Activated CD4-positive, alpha-beta memory T cell treated with anti-CD3 and anti-CD28 coated beads, Interleukin-2, amount 10 ng/mL, durations not matched to agents 7 days and 5 days (primary cell): ENCODE measurements at regions of chr12 and their contacts with region 1.

Region 1: DNA sequence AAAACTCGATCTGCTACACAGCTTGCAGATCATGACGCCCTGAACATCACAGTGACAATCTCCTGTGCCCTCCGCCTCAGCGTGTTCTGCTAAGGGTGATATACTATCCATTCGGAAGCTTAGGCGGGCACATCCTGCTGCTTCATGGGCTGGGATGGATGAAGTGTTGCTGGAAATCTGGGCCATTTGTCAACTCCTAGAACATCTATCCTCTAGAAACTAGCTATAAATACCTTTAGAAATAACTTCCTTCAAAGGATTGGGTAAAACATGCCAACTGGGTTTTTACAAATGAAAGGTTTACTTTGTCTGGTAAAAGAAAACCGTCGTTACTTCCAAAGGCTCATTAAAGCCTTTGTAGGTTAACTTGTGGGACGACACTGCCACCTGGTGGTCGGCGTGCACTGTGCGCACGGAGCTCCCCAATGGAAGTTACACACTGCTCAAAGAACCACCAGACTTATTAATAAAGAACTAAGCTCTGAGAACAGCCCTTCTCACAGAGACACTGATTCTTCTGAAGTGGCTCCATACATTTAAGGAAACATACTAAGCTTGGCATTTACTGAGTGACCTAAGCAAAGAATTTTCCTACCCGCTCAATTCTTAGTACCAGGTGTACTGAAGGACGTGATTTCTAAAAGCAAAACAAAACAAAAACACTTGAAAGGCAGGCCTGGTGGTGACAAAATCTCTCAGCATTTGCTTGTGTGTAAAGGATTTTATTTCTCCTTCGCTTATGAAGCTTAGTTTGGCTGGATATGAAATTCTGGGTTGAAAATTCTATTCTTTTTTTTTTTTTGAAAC is 21.6 kb upstream of the CACNA2D4 start:
- DNase-seq: peak; percentile 89
- H3K4me3 Mint-ChIP-seq: no peak overlapping the region
- H3K27ac Mint-ChIP-seq: peak overlapping the region; percentile 34
- H3K4me1 Mint-ChIP-seq: peaks cover 4% of the 10 kb centered on the region
- H3K27me3 Mint-ChIP-seq: no peaks in the 10 kb centered on the region

Region 2: DNA sequence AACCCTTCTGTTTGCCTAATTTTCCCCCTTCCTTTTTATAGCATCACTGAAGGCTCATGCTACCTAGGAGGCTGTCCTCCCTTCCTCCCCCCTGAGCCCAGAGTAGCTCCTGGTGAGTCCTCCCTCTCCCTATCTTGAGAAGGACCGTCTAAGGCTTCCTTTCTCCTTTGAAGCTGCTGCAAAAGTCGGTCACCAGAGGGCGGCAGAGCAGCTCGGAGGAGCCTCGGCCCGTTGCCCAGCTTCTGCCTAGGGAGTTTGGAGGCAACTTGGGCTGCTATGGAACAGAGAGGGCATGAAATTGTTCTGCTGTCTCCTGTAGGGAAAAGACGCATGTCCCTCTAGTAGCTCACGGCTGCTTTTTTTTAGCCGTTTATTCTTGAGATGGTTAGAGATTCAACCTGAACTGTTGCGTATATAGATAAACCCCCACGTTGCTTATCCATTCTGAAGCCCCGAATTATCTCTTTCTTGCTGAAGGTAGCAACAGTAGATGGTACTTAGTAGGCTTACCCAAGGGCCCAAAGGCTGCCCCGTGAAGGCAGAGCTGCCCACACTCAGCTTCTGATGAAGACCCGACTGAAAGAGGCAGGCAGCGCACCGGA is 305.3 kb before region 1 on chr12:
- CTCF ChIA-PET with region 1: interaction called, 11 read pairs
- POLR2A ChIA-PET with region 1: no interaction called
- DNase-seq: peak; percentile 68
- H3K4me3 Mint-ChIP-seq: no peak overlapping the region
- H3K27ac Mint-ChIP-seq: no peak overlapping the region
- H3K4me1 Mint-ChIP-seq: peaks cover 9% of the 10 kb centered on the region
- H3K27me3 Mint-ChIP-seq: peaks cover 61% of the 10 kb centered on the region

Region 3: DNA sequence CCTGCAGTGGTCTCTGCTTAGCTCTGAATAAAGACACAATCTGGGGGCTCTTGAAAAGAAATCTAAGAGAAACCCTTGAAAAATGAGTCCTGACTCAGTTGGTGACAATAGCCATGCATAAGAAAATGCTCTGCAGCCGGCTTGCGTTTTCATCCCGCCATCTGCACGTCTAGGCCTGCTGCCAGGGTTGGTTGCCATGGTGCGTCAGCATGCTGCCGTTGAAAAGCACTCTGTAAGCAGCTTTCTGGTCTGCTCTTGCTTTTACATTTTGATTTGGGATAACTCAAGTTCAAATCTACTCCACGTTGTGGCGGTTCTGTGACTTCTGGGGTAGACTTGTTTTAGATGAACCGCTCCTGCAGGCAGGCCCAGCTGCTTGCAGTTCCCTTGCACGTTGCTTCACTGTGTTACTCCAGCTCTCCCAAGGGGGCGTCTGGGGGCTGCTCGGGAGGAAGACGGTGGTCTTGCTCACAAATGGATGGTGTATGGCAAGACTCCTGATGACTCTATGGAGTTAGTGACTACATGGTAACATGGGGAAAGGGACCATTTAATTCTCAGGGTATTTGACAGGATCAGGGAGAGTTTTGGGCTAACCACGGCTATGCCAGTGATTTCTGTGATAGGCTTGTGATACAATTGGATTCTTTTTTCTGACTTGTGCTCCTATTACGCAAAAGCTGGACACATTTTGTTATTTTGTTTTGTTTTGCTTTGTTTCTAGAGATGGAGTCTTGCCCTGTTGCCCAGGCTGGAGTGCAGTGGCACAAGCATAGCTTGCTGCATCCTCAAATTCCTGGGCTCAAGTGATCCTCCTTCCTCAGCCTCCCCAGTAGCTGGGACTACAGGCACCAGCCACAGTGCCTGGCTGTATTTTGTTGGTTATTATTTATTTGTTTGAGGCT is 295.2 kb before region 1 on chr12:
- CTCF ChIA-PET with region 1: interaction called, 10 read pairs
- POLR2A ChIA-PET with region 1: no interaction called
- DNase-seq: no peak
- H3K4me3 Mint-ChIP-seq: no peak overlapping the region
- H3K27ac Mint-ChIP-seq: no peak overlapping the region
- H3K4me1 Mint-ChIP-seq: peaks cover 32% of the 10 kb centered on the region
- H3K27me3 Mint-ChIP-seq: peaks cover 19% of the 10 kb centered on the region

Region 4: GRCh38 chr12:1650260-1650977 is 289.6 kb before region 1 on chr12:
- CTCF ChIA-PET with region 1: interaction called, 46 read pairs
- POLR2A ChIA-PET with region 1: interaction called, 10 read pairs
- DNase-seq: no peak
- H3K4me3 Mint-ChIP-seq: no peak overlapping the region
- H3K27ac Mint-ChIP-seq: no peak overlapping the region
- H3K4me1 Mint-ChIP-seq: peaks cover 8% of the 10 kb centered on the region
- H3K27me3 Mint-ChIP-seq: peaks cover 43% of the 10 kb centered on the region

Region 5: DNA sequence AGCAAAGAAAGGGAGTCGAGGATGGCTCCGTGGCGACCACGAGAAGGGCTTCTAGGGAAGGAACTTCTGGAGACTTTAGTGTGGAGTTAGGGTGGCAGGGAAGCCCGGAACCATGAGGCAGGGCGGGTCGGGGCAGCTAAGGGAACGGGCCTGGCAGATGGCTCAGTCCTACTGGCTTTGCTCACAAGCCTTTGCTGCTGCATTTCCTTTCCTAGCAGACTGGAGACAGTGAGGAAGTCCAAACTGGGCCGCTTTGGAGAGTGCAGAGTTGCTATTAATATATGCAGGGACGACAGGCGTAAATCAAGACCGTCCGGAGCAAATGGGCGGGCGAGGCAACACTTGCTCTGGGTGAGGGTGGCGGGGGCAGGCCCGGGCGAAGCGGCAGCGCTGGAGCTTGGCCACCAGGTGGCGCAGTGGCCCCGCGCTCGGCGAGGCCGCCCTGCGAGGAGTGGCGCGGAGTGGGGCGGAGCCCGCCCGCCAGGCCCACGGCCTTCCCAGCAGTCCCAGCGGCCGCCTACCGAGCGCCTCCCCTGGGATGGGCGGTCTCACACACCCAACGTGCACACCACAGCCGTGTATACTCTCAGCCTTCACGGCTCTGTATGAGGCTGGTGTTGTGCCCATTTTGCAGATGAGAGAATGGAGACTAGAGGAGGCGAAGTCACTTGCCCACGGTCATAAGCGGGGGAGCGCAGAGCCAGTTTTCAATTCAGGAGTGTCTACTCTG is 144.1 kb before region 1 on chr12:
- CTCF ChIA-PET with region 1: interaction called, 62 read pairs
- POLR2A ChIA-PET with region 1: interaction called, 15 read pairs
- DNase-seq: peak; percentile 95
- H3K4me3 Mint-ChIP-seq: peak overlapping the region; percentile 82
- H3K27ac Mint-ChIP-seq: peak overlapping the region; percentile 79
- H3K4me1 Mint-ChIP-seq: peaks cover 18% of the 10 kb centered on the region
- H3K27me3 Mint-ChIP-seq: no peaks in the 10 kb centered on the region

Region 6: GRCh38 chr12:1974812-1975211 is 34.8 kb after region 1 on chr12:
- CTCF ChIA-PET with region 1: interaction called, 10 read pairs
- POLR2A ChIA-PET with region 1: no interaction called
- DNase-seq: no peak
- H3K4me3 Mint-ChIP-seq: no peak overlapping the region
- H3K27ac Mint-ChIP-seq: no peak overlapping the region
- H3K4me1 Mint-ChIP-seq: peaks cover 3% of the 10 kb centered on the region
- H3K27me3 Mint-ChIP-seq: no peaks in the 10 kb centered on the region

Region 7: DNA sequence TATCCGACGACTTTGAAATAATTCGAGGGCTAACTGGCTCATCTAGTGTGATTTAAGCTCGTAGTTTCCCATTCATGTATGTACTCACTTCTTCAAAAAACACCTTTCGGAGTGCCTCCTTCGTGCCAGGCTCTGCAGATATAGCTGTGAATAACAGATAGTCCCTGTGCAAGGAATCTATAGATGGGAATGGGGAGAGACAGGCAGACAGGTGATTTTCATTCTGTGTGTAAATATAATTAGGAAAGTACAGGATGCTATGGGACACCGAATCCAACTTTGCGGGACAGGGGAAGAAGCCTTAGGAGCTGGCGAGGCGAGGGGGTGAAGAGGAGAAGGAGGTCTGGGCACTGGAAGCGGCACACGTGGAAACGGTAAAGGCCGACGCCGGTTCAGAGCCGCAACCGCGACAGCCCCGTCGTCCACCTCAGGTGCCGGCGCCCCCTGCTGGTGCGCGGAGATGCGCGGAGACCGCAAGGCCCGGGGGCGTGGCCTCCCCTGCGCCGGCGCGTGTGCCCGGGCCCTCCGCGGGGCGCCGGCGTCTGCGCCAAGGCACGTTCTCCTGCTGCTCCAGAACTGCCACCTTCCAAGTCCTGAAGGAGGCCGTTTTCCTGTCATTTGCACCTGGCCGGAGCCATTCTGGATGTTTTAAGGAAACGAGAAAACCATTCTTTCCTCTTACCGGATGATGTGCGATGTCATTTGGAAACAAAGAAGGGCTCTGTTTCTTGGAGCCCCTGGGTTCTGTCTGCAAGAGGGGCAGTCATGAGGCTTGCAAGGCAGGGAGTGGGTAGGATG is 94.8 kb after region 1 on chr12:
- CTCF ChIA-PET with region 1: interaction called, 12 read pairs
- POLR2A ChIA-PET with region 1: no interaction called
- DNase-seq: peak; percentile 86
- H3K4me3 Mint-ChIP-seq: peak overlapping the region; percentile 36
- H3K27ac Mint-ChIP-seq: no peak overlapping the region
- H3K4me1 Mint-ChIP-seq: peaks cover 12% of the 10 kb centered on the region
- H3K27me3 Mint-ChIP-seq: peaks cover 60% of the 10 kb centered on the region